BJ (cell line): ENCODE measurements at regions of chr19 and their contacts with region 1.

Region 1: GRCh38 chr19:47713046-47714021 is at the start of gene EHD2:
- DNase-seq: no peak
- H3K4me3 ChIP-seq: peak within 1 kb of the TSS; percentile 86
- H3K27me3 ChIP-seq: no peaks in the 10 kb centered on the region
- CTCF ChIP-seq: peak; percentile 94
- polyA plus RNA-seq, gene EHD2: 69.5 and 132 TPM in 2 replicates

Region 2: DNA sequence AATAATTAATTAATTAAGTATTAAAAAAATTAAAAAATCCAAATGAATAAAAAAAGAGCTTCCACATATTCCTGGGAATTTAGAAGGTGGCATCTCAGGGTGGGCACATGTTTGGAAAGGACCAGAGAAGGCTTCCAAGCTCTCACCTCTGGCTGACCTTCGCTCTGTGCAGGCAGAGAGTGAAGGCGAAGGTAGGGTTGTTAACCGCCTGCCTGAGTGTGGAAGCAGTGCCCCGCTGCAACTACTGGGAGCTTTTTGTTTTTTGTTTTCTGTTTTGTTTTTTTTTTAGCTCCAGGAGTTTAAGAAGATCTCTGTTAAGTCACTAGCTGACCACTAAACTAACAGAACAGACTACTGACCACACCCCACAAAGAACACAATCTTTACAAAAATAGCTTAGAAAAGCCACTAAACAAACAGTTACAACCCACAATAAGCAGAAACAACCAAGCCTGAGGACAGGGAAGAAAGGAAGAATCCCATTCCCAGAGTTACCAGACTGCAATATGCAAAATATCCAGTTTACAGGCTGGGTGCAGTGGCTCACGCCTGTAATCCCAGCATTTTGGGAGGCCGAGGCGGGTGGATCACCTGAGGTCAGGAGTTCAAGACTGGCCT is 151.8 kb before region 1 on chr19:
- CTCF ChIA-PET with region 1: no interaction called
- POLR2A ChIA-PET with region 1: no interaction called
- DNase-seq: no peak
- H3K4me3 ChIP-seq: no peak overlapping the region
- H3K27me3 ChIP-seq: no peaks in the 10 kb centered on the region
- CTCF ChIP-seq: no peak

Region 3: GRCh38 chr19:47745010-47745901 is 31.9 kb after region 1 on chr19 and contains the start of gene NOP53:
- CTCF ChIA-PET with region 1: interaction called, 160 read pairs
- POLR2A ChIA-PET with region 1: interaction called, 4 read pairs
- DNase-seq: peak; percentile 85
- H3K4me3 ChIP-seq: peak within 1 kb of the TSS; percentile 83
- H3K27me3 ChIP-seq: no peaks in the 10 kb centered on the region
- CTCF ChIP-seq: no peak
- polyA plus RNA-seq, gene NOP53: 119 and 135 TPM in 2 replicates

Region 4: DNA sequence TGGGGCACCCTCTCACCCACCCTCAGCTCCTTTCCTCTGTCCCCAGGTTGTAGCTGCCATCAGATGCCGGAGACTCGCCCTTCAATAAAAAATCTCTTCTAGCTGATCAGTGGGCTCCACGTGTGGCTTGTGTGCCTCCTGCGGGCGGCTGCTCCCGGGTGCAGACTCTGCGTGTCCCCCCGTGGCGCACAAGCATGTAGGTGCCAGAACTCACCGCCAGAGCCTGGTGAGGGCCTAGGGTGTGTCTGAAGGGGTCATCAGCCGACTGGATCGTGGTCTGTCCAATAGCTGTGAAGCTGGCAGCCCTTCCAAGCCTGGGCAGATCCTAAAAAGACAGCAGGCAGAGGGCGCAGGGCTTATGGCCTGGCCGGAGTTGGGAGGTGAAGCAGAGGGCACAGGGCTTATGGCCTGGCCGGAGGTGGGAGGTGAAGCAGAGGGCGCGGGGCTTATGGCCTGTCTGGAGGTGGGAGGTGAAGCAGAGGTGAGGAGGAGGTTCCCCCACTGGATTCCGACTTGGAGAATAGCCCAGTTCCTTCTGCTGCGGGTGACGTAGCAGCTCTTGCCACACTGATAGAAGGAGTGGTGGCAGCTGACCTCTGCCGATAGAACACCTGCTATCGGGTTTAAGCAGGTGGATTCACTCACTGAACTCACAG is 43.7 kb after region 1 on chr19:
- CTCF ChIA-PET with region 1: interaction called, 13 read pairs
- POLR2A ChIA-PET with region 1: no interaction called
- DNase-seq: no peak
- H3K4me3 ChIP-seq: no peak overlapping the region
- H3K27me3 ChIP-seq: no peaks in the 10 kb centered on the region
- CTCF ChIP-seq: no peak

Region 5: GRCh38 chr19:47765523-47766358 is 52.4 kb after region 1 on chr19:
- CTCF ChIA-PET with region 1: interaction called, 21 read pairs
- POLR2A ChIA-PET with region 1: no interaction called
- DNase-seq: no peak
- H3K4me3 ChIP-seq: no peak overlapping the region
- H3K27me3 ChIP-seq: no peaks in the 10 kb centered on the region
- CTCF ChIP-seq: peak; percentile 80

Region 6: GRCh38 chr19:47778954-47779351 is 65.6 kb after region 1 on chr19:
- CTCF ChIA-PET with region 1: interaction called, 16 read pairs
- POLR2A ChIA-PET with region 1: no interaction called
- DNase-seq: no peak
- H3K4me3 ChIP-seq: peak overlapping the region; percentile 93
- H3K27me3 ChIP-seq: no peaks in the 10 kb centered on the region
- CTCF ChIP-seq: no peak

Region 7: DNA sequence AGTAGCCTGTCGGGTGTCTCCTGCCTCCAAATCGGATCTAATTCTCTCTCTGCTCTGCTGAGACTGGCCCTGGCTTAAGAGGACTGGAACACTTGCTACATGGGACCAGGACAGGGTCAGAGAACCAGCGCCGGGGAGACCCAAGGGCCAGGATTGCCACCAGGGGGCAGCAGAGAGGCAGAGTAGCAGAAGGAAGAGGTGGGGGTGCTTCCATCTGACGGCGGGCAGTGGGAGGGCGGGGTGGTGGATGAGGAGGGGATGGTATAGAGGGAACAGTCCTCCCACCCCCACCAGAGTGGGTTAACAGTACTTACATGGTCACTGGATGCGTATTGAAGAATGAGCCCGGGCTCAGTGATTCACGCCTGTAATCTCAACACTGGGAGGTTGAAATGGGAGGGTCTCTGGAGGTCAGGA is 77.1 kb after region 1 on chr19:
- CTCF ChIA-PET with region 1: interaction called, 45 read pairs
- POLR2A ChIA-PET with region 1: no interaction called
- DNase-seq: no peak
- H3K4me3 ChIP-seq: no peak overlapping the region
- H3K27me3 ChIP-seq: no peaks in the 10 kb centered on the region
- CTCF ChIP-seq: peak; percentile 98